Right ventricle myocardium inferior (tissue), 1 donor: ENCODE measurements at regions of chr1 and their contacts with region 1.

Region 1: DNA sequence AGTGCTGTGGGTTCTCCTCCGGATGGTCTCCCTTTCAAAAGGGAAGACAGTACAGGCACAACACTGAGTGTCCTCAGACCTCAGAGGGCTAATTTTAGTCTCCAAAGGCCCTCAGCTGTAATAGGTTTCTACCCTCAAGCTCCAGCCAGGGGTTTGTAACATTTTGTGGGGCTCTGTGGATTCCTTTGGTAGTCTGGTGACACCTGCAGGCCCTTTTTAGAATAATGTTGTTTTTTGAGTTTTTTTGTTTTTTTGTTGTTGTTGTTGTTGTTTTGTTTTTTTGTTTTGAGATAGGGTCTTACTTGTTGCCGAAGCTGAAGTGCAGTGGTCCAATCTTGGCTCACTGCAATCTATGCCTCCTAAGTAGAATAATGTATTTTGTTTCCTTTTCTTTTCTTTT is 15.0 kb upstream of the TMEM201 start:
- DNase-seq: no peak
- ATAC-seq: peak; percentile 46

Region 2: DNA sequence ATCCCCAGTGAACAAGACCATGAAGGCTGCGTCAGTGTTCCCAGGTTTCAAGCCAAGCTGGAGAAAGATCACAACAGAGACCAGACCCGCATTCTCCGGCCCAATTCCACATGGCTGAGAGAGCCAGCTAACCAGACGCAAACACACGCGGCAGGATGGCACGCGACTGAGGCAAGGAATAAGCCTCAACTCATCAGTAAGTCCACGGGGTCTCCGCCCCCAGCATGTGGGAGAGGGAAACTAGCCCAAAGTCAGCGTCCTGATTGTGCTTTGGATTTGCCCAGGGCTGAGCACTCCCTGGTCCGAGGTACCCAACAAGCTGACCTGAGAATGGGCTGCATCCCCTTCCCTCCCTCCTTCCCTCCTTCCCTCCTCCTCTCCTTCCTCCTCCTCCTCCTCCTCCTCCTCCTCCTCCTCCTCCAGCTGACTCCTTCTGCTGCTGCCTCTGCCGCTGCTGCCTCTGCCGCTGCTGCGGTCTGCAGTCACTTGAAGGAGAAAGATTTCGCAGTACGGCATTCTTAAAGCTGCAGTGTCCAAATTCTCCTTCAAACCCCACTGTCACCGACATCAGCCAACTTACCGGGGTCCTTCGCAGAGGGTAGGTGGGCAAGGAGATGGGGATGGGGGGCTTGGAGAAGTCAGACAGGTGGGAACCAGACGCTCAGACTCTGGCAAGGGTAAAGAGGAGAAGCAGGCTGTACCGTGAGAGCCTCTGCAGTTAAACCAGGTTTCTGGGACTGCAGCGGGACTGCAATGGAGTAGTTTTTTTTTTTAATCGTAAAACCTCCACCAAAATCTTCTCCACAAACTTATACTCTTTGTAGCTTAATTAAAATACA is 372.1 kb before region 1 on chr1:
- intact Hi-C with region 1: no loop called
- DNase-seq: no peak
- ATAC-seq: peak; percentile 47

Region 3: GRCh38 chr1:9539165-9539828 is 34.4 kb before region 1 on chr1 and contains the start of gene SLC25A33:
- intact Hi-C with region 1: loop called (anchors 5 kb)
- DNase-seq: peak; percentile 98
- ATAC-seq: peak; percentile 99
- total RNA-seq, gene SLC25A33: 5.7 TPM